Endothelial cell of umbilical vein (primary cell): ENCODE measurements at regions of chr1 and their contacts with region 1.

Region 1: DNA sequence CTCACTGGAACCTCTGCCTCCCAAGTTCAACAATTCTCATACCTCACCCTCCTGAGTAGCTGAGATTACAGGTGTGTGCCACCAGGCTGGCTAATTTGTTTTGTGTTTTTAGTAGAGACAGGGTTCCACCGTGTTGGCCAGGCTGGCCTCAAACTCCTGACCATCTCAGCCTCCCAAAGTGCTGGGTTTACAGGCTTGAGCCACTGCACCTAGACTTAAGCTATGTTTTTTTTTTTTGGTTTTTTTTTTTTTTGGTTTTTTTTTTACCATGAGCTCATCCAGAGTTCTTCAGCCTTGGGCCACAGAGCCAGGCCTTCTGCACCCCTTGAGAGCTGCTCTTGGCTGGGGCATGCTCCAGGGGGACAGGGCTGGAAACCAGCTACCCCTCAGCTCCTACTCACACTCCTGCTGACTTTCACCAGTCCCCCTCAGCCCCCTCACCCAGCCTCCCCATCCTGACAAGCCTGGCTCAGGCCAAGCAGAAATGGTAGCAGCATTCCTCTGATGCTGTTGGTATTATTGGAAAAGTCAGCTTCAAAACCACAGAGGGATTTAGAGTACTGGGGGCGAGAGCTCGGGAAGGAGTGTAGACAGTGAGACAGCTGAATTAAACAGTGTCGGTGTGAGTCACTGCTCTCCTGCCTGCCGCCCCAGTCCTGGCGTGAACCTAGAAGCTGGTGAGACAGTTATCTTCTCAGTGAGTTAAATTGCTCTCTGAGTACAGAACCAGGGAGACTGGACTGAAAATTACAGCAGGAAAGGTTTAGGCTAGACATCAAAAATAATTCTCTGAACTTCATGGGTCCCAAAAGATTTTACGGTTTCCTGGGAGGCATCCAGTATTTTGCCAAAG is 63.7 kb downstream of the NAV1 start:
- DNase-seq: peak; percentile 42
- H3K4me3 ChIP-seq: no peak overlapping the region
- H3K27ac ChIP-seq: peak overlapping the region; percentile 58
- H3K4me1 ChIP-seq: peaks cover 37% of the 10 kb centered on the region
- H3K27me3 ChIP-seq: no peaks in the 10 kb centered on the region
- CTCF ChIP-seq: no peak
- POLR2A ChIP-seq: no peak

Region 2: DNA sequence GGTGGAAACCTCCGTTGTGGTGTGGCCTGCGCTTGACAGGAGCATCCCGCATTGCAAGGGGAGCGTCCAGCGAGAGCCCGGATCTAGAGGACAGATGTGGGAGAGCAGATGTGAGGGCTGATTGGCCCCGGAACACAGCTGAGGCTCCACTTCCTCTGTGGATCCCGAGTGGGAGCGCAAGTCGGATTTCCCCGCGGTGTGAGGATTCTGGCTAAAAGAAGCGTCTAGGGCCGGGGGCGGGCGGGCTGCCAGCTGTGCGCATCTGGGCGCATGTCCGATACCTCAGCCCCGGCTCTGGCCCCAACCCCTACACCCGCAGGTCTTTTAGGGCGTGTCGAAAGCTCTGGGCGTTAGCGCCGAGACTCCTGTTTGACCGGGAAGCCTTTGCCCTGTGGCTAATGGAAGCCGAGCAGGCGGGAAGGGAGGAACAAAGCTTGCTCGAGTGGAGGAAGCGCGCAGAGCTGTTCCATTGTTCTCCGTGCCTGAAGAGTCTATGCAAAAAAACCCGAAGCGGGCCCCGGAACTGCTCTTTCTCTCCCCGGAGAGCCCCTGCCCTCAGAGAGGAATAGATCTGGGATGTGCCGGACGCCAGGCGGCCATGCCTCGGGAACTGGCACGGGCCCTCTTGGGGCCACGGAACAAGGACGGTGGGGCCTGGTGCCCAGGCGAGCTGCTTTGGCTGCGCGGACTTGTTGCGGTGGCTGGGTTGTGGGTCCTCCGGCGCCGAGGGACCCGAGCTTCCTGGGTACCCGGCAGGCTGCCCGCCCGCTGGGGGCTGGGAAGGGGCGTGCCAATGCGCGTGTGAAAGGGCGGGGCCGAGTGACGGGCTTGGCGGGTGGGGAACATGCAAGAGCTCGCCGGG is 47.4 kb after region 1 on chr1:
- CTCF ChIA-PET with region 1: interaction called, 4 read pairs
- POLR2A ChIA-PET with region 1: no interaction called
- dilution Hi-C with region 1: no loop called
- intact Hi-C with region 1: loop called (anchors 1 kb)
- DNase-seq: peak; percentile 65
- H3K4me3 ChIP-seq: peak overlapping the region; percentile 30 to 57 (median 49)
- H3K27ac ChIP-seq: peak overlapping the region; percentile 50
- H3K4me1 ChIP-seq: peaks cover 30% of the 10 kb centered on the region
- H3K27me3 ChIP-seq: no peaks in the 10 kb centered on the region
- CTCF ChIP-seq: no peak
- POLR2A ChIP-seq: no peak